ENCODE measurements at regions of chr20 and their contacts with region 1.

Region 1: GRCh38 chr20:37336369-37337207 is 9.4 kb upstream of the SRC start:
- DNase-seq: peak; percentile 61 to 77 (median 66)
- H3K4me3 ChIP-seq: no peak overlapping the region
- H3K27ac ChIP-seq: peak overlapping the region; percentile 7 to 28
- H3K4me1 ChIP-seq: peaks cover 9% of the 10 kb centered on the region
- H3K27me3 ChIP-seq: no peaks in the 10 kb centered on the region
- CTCF ChIP-seq: no peak
- EP300 ChIP-seq: no peak
- POLR2A ChIP-seq: no peak

Region 2: DNA sequence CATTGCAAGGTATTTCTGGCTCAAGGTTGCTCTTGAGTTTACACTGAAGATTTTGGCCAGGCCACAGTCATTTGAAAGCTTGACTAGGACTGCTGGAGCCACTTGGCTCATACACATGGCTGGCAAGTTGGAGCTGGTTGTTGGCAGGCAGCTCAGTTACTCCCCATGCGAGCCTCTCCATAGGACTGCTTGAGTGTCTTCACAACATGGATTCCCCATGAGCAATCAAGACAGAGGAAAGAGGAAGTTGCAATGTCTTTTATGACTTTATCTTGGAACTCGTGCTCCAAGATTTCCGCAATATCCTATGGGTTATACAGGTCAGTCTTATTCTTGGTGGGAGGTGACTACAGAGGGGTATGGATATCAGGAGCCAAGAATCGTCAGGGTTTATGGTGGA is 48.5 kb before region 1 on chr20:
- intact Hi-C with region 1: loop called in 2 of 4 experiments (anchors 5 to 10 kb)
- DNase-seq: peak in 1 of 5 donors; percentile 7
- H3K4me3 ChIP-seq: no peak overlapping the region
- H3K27ac ChIP-seq: no peak overlapping the region
- H3K4me1 ChIP-seq: peaks cover 2% of the 10 kb centered on the region
- H3K27me3 ChIP-seq: no peaks in the 10 kb centered on the region
- CTCF ChIP-seq: no peak
- EP300 ChIP-seq: no peak
- POLR2A ChIP-seq: no peak